Sigmoid colon (tissue), 7 donors: ENCODE measurements at regions of chr1 and their contacts with region 1.

Region 1: GRCh38 chr1:8926707-8927694 is 18.7 kb upstream of the CA6 start:
- DNase-seq: no peak
- H3K4me3 ChIP-seq: no peak overlapping the region
- H3K27ac ChIP-seq: no peak overlapping the region
- H3K4me1 ChIP-seq: no peaks in the 10 kb centered on the region
- H3K27me3 ChIP-seq: no peaks in the 10 kb centered on the region
- CTCF ChIP-seq: no peak
- EP300 ChIP-seq: no peak
- POLR2A ChIP-seq: no peak

Region 2: DNA sequence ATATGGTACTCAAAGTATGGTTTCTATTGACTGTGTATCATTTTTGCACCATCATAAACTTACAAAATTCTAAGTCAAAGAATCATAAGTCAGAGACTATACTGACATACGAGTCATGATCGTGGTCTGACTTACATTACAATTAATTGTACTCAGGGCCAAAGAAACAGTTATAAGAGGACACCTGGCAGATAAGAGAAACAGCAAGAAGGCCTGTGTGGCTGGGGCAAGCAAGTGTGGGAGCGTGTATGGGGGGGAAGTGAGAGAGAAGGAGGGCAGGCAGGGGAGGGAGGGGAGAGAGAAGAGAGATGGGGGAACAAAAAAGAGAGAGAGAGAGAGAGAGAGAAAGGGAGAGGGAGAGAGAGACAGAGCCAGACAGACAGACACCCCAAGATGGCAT is 180.4 kb before region 1 on chr1:
- intact Hi-C with region 1: no loop called
- DNase-seq: no peak
- H3K4me3 ChIP-seq: no peak overlapping the region
- H3K27ac ChIP-seq: no peak overlapping the region
- H3K4me1 ChIP-seq: peaks cover 0 to 17% (median 7%) of the 10 kb centered on the region in 4 donors
- H3K27me3 ChIP-seq: no peaks in the 10 kb centered on the region
- CTCF ChIP-seq: no peak
- EP300 ChIP-seq: no peak
- POLR2A ChIP-seq: no peak

Region 3: DNA sequence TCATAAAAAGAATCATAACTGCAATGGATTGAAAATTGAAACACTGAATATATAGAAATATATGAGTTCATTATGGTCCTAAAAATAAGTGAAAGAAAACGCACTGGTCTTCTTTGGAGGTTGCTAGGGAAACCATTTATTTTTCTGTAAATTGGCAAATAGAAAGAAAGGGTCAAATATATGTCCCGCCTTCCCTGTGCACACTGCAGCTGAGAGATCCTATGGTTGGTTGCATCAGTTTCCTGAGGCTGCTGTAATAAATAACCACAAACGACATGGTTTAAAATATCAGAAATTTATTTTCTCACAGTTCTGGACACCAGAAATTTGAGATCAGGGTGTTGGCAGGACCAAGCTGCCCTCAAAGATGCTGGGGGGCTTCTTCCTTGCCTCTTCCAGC is 53.7 kb after region 1 on chr1:
- intact Hi-C with region 1: loop called (anchors 2 kb)
- DNase-seq: no peak
- H3K4me3 ChIP-seq: no peak overlapping the region
- H3K27ac ChIP-seq: no peak overlapping the region
- H3K4me1 ChIP-seq: peaks cover 0 to 6% (median 4%) of the 10 kb centered on the region in 4 donors
- H3K27me3 ChIP-seq: no peaks in the 10 kb centered on the region
- CTCF ChIP-seq: no peak
- EP300 ChIP-seq: no peak
- POLR2A ChIP-seq: no peak